Esophagus squamous epithelium (tissue), 5 donors: ENCODE measurements at regions of chr14 and their contacts with region 1.

Region 1: DNA sequence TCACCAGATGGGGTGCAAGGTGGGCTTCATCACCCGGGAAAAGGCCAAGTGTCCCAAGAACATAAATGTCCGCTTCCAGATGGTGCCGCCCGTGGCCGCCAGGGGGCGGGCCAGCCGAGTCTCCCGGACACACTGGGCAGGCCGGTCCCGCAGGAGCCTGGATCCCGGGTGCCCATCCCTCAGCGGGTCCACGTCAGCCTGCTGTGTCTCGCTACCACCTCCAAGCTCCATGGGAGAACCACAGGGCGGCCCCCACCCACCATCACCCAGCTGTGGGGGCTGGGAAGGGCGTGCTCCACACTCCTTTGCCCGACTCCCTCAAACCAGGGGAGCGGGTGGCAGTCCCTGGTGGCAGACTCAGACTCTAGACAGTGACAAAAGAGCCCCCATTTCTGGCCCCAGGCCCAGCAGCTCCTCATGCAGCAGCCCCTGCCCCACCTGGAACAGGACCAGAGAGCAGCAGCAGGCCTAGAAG is 22.0 kb upstream of the NUDT14 start:
- DNase-seq: no peak
- H3K4me3 ChIP-seq: no peak overlapping the region
- H3K27ac ChIP-seq: no peak overlapping the region
- H3K4me1 ChIP-seq: peaks cover 19 to 69% (median 37%) of the 10 kb centered on the region in 3 donors
- H3K27me3 ChIP-seq: peaks cover 0 to 58% (median 0%) of the 10 kb centered on the region in 4 donors
- CTCF ChIP-seq: peak; percentile 78 to 97 (median 94)
- POLR2A ChIP-seq: no peak

Region 2: GRCh38 chr14:105330491-105330895 is 127.4 kb after region 1 on chr14:
- intact Hi-C with region 1: no loop called
- DNase-seq: no peak
- H3K4me3 ChIP-seq: no peak overlapping the region
- H3K27ac ChIP-seq: peak overlapping the region in 2 of 4 donors; percentile 57 to 59
- H3K4me1 ChIP-seq: peaks cover 7 to 56% (median 13%) of the 10 kb centered on the region in 3 donors
- H3K27me3 ChIP-seq: no peaks in the 10 kb centered on the region
- CTCF ChIP-seq: no peak
- POLR2A ChIP-seq: no peak

Region 3: GRCh38 chr14:105351920-105352851 is 149.1 kb after region 1 on chr14:
- intact Hi-C with region 1: loop called (anchors 2 kb)
- DNase-seq: no peak
- H3K4me3 ChIP-seq: no peak overlapping the region
- H3K27ac ChIP-seq: peak overlapping the region in 1 of 4 donors; percentile 6
- H3K4me1 ChIP-seq: peaks cover 0 to 18% (median 4%) of the 10 kb centered on the region in 3 donors
- H3K27me3 ChIP-seq: no peaks in the 10 kb centered on the region
- CTCF ChIP-seq: peak; percentile 82 to 92 (median 91)
- POLR2A ChIP-seq: no peak